Pancreas (tissue), 10 donors: ENCODE measurements at regions of chr1 and their contacts with region 1.

Region 1: DNA sequence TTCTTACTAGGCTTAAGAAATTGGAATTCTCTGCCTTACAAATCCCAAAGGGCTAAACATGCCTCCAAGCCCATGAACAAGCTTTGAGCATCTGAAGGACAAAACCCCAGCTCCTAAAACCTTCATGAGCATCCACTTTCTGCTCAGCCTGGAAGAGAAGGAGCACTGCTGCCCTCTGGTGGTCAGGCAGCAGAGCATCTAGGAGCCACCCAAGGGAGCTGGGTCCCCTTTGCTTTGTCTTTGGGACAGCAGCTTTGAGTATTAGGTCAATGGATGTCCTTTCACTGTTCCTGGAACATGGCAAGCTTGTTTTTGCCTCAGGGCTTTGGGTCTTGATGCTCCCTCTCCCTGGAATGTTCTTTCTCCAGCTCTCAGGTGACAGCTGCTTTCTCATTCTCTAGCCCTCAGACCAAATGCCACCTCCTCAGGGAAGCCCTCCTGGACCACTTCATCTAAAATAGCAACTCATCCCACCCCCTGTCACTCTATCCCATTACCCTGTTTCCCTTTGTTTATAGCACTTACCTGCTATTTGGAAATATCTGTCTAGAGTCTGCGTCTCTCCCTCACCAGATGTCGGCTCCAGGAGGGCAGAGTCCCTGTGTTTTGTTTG is 25.7 kb downstream of the RAB7B start:
- DNase-seq: peak; percentile 62 to 93 (median 84)
- ATAC-seq: peak; percentile 90 to 93 (median 92)
- H3K4me3 ChIP-seq: no peak overlapping the region
- H3K27ac ChIP-seq: peak overlapping the region in 1 of 4 donors; percentile 34
- H3K4me1 ChIP-seq: no peaks in the 10 kb centered on the region
- H3K27me3 ChIP-seq: no peaks in the 10 kb centered on the region
- CTCF ChIP-seq: peak; percentile 88 to 94 (median 92)

Region 2: DNA sequence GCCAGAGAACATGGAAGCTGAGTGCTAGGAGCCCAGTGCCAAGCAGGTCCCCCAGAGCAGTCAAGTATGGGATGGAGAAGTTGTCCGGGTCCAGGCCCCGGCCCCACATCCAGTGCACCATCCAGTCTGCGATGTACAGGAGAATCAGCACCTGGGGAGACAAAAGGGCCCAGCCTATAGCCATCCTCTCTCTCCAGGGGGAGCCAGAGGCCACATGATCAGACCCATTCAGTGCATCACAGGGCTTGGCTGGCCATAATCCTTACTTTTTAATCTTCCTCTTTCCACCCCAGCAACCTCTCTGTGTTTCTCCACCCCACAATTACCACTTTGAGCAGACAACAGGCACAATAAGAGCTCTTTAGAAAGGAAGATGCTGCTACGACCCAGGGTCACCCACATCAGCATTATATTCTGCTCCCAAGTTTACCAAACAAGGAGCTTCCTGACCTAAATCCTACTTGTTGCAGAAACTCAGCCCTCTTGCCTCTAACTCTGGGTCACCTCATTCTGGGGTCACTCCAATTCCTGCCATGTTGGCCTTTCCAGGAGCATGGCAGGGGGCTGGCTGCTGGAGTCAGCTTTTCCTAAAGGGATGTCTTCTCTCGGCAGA is 185.8 kb before region 1 on chr1:
- intact Hi-C with region 1: loop called in 2 of 3 experiments (anchors 5 kb)
- DNase-seq: peak in 4 of 6 donors; percentile 55 to 78 (median 59)
- ATAC-seq: peak; percentile 72 to 94 (median 91)
- H3K4me3 ChIP-seq: no peak overlapping the region
- H3K27ac ChIP-seq: no peak overlapping the region
- H3K4me1 ChIP-seq: no peaks in the 10 kb centered on the region
- H3K27me3 ChIP-seq: no peaks in the 10 kb centered on the region
- CTCF ChIP-seq: peak; percentile 36 to 63 (median 56)

Region 3: GRCh38 chr1:205798600-205798999 is 178.9 kb before region 1 on chr1:
- intact Hi-C with region 1: loop called in 2 of 3 experiments (anchors 5 kb)
- DNase-seq: peak in 1 of 6 donors; percentile 42
- ATAC-seq: peak in 2 of 4 donors; percentile 1 to 6
- H3K4me3 ChIP-seq: no peak overlapping the region
- H3K27ac ChIP-seq: no peak overlapping the region
- H3K4me1 ChIP-seq: peaks cover 19 to 24% (median 23%) of the 10 kb centered on the region in 3 donors
- H3K27me3 ChIP-seq: no peaks in the 10 kb centered on the region
- CTCF ChIP-seq: no peak